ENCODE measurements at regions of chrX and their contacts with region 1.

Region 1: GRCh38 chrX:68307769-68308168 is 125.5 kb downstream of the OPHN1 start:
- DNase-seq: no peak
- H3K4me3 ChIP-seq: no peak overlapping the region
- H3K27ac ChIP-seq: no peak overlapping the region
- H3K4me1 ChIP-seq: no peaks in the 10 kb centered on the region
- H3K27me3 ChIP-seq: no peaks in the 10 kb centered on the region
- CTCF ChIP-seq: no peak
- POLR2A ChIP-seq: no peak

Region 2: DNA sequence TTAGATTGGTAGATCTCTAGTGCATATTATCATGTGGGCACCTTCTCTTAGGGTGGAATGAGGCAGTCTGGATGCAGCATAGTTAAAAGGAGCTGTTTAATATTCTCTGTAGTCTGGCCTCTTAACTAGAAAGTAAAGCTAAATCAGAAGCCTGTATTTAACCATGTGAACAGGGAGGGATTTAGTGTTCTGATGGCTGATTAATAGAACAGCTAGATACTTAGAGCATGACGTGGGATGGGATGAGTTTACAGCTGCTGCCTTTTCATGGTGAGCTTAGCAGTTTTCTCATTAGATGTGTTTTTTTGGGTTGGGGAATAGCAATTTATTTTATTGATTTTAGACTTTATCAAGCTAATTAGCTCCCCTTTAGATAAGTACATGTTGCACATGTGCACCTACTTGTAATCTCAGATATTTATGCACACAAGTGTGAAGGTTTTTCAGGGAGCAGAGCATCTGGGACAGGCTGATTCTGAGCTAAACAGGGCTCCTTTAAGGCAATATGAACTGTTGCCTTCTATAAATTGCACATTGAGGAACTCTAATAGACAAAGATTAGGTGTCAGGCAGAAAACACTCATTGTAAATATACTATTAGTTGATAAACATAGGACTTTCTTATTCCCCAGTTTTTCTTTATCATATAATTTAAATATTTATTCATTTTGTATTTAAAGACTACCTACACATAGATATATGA is 225.2 kb after region 1 on chrX:
- CTCF ChIA-PET with region 1: no interaction called
- POLR2A ChIA-PET with region 1: interaction called, 16 read pairs
- dilution Hi-C with region 1: no loop called
- intact Hi-C with region 1: no loop called
- DNase-seq: no peak
- H3K4me3 ChIP-seq: no peak overlapping the region
- H3K27ac ChIP-seq: no peak overlapping the region
- H3K4me1 ChIP-seq: no peaks in the 10 kb centered on the region
- H3K27me3 ChIP-seq: no peaks in the 10 kb centered on the region
- CTCF ChIP-seq: no peak
- POLR2A ChIP-seq: no peak

Region 3: GRCh38 chrX:68588602-68589371 is 281.0 kb after region 1 on chrX:
- CTCF ChIA-PET with region 1: no interaction called
- POLR2A ChIA-PET with region 1: no interaction called
- dilution Hi-C with region 1: no loop called
- intact Hi-C with region 1: no loop called
- DNase-seq: no peak
- H3K4me3 ChIP-seq: no peak overlapping the region
- H3K27ac ChIP-seq: no peak overlapping the region
- H3K4me1 ChIP-seq: no peaks in the 10 kb centered on the region
- H3K27me3 ChIP-seq: no peaks in the 10 kb centered on the region
- CTCF ChIP-seq: no peak
- POLR2A ChIP-seq: no peak